H1 (cell line): ENCODE measurements at regions of chr4 and their contacts with region 1.

Region 1: GRCh38 chr4:112616984-112617383 is 19.7 kb downstream of the ZGRF1 start:
- DNase-seq: no peak
- H3K4me3 ChIP-seq: no peak overlapping the region
- H3K27ac ChIP-seq: no peak overlapping the region
- H3K4me1 ChIP-seq: no peaks in the 10 kb centered on the region
- H3K27me3 ChIP-seq: no peaks in the 10 kb centered on the region
- CTCF ChIP-seq: no peak
- EP300 ChIP-seq: no peak
- POLR2A ChIP-seq: no peak
- RAD21 ChIP-seq: no peak

Region 2: DNA sequence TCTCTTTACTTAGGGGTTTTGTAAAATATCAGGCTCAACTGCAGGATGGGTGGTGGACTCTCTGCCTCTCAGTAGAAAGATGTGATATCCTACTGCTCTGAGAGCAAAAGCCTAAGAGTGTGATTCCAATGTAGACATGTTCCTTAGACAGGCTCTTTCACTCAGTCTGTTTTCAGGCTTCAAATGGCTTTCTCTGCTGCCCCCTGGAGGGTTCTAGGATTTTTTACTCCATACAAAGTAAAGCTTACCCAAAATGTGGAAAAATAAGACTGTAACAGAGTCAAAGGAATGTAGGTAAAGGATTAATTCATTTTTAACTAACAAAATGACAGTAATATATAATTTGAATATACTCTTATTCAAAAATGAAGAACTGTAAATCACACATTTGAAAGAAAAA is 12.4 kb before region 1 on chr4:
- CTCF ChIA-PET with region 1: interaction called, 22 read pairs
- POLR2A ChIA-PET with region 1: interaction called, 3 read pairs
- DNase-seq: peak; percentile 5 to 53
- H3K4me3 ChIP-seq: no peak overlapping the region
- H3K27ac ChIP-seq: no peak overlapping the region
- H3K4me1 ChIP-seq: no peaks in the 10 kb centered on the region
- H3K27me3 ChIP-seq: no peaks in the 10 kb centered on the region
- CTCF ChIP-seq: peak in 2 of 3 experiments; percentile 62 to 69; a peak in 3 of 4 replicates
- EP300 ChIP-seq: no peak
- POLR2A ChIP-seq: no peak
- RAD21 ChIP-seq: peak; percentile 56 to 67

Region 3: GRCh38 chr4:112704991-112705845 is 88.2 kb after region 1 on chr4:
- CTCF ChIA-PET with region 1: no interaction called
- POLR2A ChIA-PET with region 1: no interaction called
- DNase-seq: peak; percentile 19 to 58
- H3K4me3 ChIP-seq: peak overlapping the region; percentile 53 to 73 (median 64)
- H3K27ac ChIP-seq: peak overlapping the region; percentile 84
- H3K4me1 ChIP-seq: peaks cover 0 to 21% (median 3%) of the 10 kb centered on the region in 4 experiments; a peak in 6 of 7 replicates
- H3K27me3 ChIP-seq: no peaks in the 10 kb centered on the region
- CTCF ChIP-seq: no peak
- EP300 ChIP-seq: no peak
- POLR2A ChIP-seq: peak; percentile 60 to 76
- RAD21 ChIP-seq: no peak